PC-3 (cell line): ENCODE measurements at regions of chr11 and their contacts with region 1.

Region 1: GRCh38 chr11:121292495-121293287 is at the start of gene SC5D:
- DNase-seq: peak; percentile 97
- ATAC-seq: peak; percentile 98
- H3K4me3 ChIP-seq: peak within 1 kb of the TSS; percentile 89
- H3K27ac ChIP-seq: peak within 1 kb of the TSS; percentile 53
- H3K4me1 ChIP-seq: peaks cover 15% of the 10 kb centered on the region
- H3K27me3 ChIP-seq: no peaks in the 10 kb centered on the region
- CTCF ChIP-seq: no peak
- total RNA-seq, gene SC5D: 38.4 and 43.0 TPM in 2 replicates

Region 2: GRCh38 chr11:120945042-120945441 is 347.6 kb before region 1 on chr11:
- CTCF ChIA-PET with region 1: no interaction called
- POLR2A ChIA-PET with region 1: no interaction called
- intact Hi-C with region 1: no loop called
- DNase-seq: no peak
- ATAC-seq: no peak
- H3K4me3 ChIP-seq: no peak overlapping the region
- H3K27ac ChIP-seq: no peak overlapping the region
- H3K4me1 ChIP-seq: no peaks in the 10 kb centered on the region
- H3K27me3 ChIP-seq: peaks cover 59% of the 10 kb centered on the region
- CTCF ChIP-seq: peak; percentile 62

Region 3: GRCh38 chr11:121249039-121249663 is 43.5 kb before region 1 on chr11:
- CTCF ChIA-PET with region 1: no interaction called
- POLR2A ChIA-PET with region 1: no interaction called
- intact Hi-C with region 1: loop called (anchors 1 kb)
- DNase-seq: peak; percentile 72
- ATAC-seq: peak; percentile 69
- H3K4me3 ChIP-seq: no peak overlapping the region
- H3K27ac ChIP-seq: no peak overlapping the region
- H3K4me1 ChIP-seq: peaks cover 45% of the 10 kb centered on the region
- H3K27me3 ChIP-seq: no peaks in the 10 kb centered on the region
- CTCF ChIP-seq: peak; percentile 86